AG04449 (cell line): ENCODE measurements at regions of chr2 and their contacts with region 1.

Region 1: DNA sequence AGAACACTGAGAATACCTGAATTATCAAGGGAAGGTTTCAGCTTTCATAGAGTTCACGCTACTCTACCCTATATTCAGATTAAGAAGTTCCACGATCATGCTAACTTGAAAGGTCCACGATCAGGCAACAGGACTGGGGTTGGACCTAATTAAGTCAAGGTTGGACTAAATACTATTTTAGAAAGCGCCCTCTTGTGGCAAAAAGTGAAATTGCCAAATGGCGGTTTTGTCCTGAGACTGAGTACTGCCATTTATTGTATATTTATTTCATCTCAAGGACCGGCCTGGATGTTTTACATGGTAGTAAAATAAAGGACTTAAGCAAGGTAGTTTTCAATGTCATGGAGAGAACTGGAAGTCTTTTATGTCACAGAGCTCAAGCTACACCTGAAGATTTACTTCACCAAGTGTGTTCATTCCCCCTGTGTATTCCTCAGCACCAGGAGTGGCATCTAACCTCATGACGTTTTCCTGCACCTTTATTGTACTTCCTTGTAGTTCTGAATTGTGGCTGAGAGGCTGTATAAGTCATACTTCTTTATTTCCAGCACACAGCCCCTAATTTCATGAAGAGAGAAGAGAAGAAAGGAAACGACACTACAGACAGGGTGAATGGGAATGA is 56.8 kb downstream of the SRD5A2 start:
- DNase-seq: no peak
- H3K4me3 ChIP-seq: no peak overlapping the region
- CTCF ChIP-seq: peak; percentile 50

Region 2: DNA sequence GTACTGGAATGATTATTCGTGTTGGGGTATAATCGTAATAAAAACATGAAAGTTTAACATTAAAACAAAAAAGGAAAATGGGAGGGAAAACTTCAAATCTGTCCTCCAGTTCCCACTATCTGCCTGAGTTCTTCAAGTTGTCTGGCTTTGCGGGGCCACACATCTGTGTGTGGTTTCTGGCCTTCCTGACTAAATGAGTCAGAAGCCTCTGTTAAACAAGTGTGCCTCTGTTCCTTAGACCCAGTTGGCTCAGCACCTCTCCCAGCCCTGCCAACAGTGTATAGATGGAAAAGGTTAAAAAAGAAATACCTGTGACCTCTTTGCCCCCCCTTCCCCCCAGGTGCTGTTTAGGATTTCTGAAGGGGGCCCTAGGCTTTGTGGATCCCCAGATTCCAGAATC is 139.6 kb before region 1 on chr2:
- CTCF ChIA-PET with region 1: interaction called, 16 read pairs
- POLR2A ChIA-PET with region 1: no interaction called
- DNase-seq: peak; percentile 76
- H3K4me3 ChIP-seq: no peak overlapping the region
- CTCF ChIP-seq: no peak

Region 3: DNA sequence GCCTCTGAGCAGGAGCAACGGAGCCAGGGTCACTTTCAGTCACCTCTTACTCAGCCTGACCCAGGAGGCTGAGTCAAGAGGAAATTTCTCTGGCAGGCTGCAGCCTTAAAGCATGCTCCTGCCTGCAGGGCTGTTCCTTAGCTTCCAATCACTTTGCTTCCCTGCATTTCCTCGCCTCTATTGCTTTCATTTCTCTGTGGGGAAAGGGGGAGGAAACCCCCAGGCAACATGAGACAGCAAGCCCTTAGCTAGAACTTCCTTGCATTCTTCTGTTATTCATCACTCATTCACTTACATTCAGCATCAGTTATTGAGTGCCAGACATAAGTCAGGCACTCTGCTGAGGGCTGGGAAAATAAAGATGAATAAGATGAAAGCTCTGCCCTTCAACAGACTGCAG is 122.4 kb before region 1 on chr2:
- CTCF ChIA-PET with region 1: interaction called, 17 read pairs
- POLR2A ChIA-PET with region 1: no interaction called
- DNase-seq: peak; percentile 94
- H3K4me3 ChIP-seq: no peak overlapping the region
- CTCF ChIP-seq: no peak

Region 4: GRCh38 chr2:31413862-31414550 is 110.0 kb before region 1 on chr2:
- CTCF ChIA-PET with region 1: interaction called, 53 read pairs
- POLR2A ChIA-PET with region 1: no interaction called
- DNase-seq: no peak
- H3K4me3 ChIP-seq: no peak overlapping the region
- CTCF ChIP-seq: no peak

Region 5: GRCh38 chr2:31446848-31447247 is 77.1 kb before region 1 on chr2:
- CTCF ChIA-PET with region 1: interaction called, 10 read pairs
- POLR2A ChIA-PET with region 1: no interaction called
- DNase-seq: peak; percentile 71
- H3K4me3 ChIP-seq: no peak overlapping the region
- CTCF ChIP-seq: no peak

Region 6: GRCh38 chr2:31511376-31511775 is 12.6 kb before region 1 on chr2:
- CTCF ChIA-PET with region 1: interaction called, 68 read pairs
- POLR2A ChIA-PET with region 1: no interaction called
- DNase-seq: no peak
- H3K4me3 ChIP-seq: no peak overlapping the region
- CTCF ChIP-seq: no peak

Region 7: GRCh38 chr2:31534636-31535035 is 10.7 kb after region 1 on chr2:
- CTCF ChIA-PET with region 1: interaction called, 18 read pairs
- POLR2A ChIA-PET with region 1: no interaction called
- DNase-seq: no peak
- H3K4me3 ChIP-seq: no peak overlapping the region
- CTCF ChIP-seq: no peak